ENCODE measurements at regions of chr10 and their contacts with region 1.

Region 1: DNA sequence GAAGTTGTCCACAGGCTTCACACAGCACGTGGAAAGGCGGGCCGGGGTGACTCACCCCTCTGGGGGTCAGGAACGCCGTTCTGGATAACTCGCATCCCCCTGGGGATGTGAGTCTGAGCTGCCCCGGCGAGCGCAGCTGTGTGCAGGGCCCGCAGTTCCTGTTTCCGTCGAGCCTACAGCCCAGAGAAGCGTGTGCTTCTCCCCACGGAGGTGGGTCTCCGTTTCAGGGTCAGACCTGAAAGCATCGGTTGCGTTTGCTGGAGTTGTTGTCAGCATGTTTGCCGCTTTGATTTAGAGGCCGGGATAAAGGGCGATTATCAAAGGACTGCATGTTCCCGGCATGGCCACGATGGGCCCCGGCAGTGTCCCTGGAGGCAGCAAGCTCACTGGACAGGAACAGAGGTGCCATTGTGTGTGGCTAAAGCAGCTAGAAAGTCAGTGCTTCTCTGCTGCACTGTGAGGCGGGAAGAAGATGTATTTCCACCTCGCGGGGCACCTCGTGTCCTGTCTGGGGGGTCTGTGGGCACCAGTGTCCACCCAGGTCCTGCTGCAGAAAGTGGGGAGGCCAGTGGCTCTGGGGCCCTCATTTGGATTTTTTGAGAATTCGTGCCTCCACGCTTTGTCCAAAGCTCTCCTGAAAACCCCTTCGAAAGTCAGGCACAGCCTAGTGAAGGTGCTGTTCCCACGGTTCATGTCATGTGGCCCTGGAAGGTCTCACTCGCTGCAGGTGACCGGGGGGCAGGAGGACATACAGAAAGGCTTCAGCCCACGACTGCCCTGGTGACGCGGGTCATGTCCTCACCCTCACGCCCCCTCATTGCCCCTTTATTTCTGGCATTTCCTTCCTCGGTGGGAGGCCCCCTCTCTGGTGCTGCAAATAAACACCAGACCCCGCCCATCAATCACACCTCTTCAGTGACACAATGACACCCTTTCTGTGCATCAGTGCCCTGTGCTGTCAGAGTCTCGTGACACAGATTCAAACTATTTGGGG is 27.4 kb upstream of the GDI2 start:
- DNase-seq: peak in 9 of 10 donors; percentile 48 to 78 (median 66)
- H3K4me3 ChIP-seq: peak overlapping the region in 44 of 59 donors; percentile 0 to 58 (median 32)
- H3K27ac ChIP-seq: peak overlapping the region in 58 of 59 donors; percentile 33 to 97 (median 88)
- H3K27me3 ChIP-seq: no peaks in the 10 kb centered on the region
- CTCF ChIP-seq: peak in 17 of 56 donors; percentile 6 to 29 (median 15)

Region 2: GRCh38 chr10:5858811-5859210 is 18.2 kb after region 1 on chr10:
- intact Hi-C with region 1: loop called in 1 of 2 experiments (anchors 2 kb)
- DNase-seq: peak in 9 of 10 donors; percentile 23 to 80 (median 66)
- H3K4me3 ChIP-seq: peak overlapping the region in 18 of 59 donors; percentile 7 to 45 (median 26)
- H3K27ac ChIP-seq: peak overlapping the region; percentile 46 to 99 (median 94)
- H3K27me3 ChIP-seq: no peaks in the 10 kb centered on the region
- CTCF ChIP-seq: peak in 17 of 56 donors; percentile 11 to 45 (median 17)

Region 3: DNA sequence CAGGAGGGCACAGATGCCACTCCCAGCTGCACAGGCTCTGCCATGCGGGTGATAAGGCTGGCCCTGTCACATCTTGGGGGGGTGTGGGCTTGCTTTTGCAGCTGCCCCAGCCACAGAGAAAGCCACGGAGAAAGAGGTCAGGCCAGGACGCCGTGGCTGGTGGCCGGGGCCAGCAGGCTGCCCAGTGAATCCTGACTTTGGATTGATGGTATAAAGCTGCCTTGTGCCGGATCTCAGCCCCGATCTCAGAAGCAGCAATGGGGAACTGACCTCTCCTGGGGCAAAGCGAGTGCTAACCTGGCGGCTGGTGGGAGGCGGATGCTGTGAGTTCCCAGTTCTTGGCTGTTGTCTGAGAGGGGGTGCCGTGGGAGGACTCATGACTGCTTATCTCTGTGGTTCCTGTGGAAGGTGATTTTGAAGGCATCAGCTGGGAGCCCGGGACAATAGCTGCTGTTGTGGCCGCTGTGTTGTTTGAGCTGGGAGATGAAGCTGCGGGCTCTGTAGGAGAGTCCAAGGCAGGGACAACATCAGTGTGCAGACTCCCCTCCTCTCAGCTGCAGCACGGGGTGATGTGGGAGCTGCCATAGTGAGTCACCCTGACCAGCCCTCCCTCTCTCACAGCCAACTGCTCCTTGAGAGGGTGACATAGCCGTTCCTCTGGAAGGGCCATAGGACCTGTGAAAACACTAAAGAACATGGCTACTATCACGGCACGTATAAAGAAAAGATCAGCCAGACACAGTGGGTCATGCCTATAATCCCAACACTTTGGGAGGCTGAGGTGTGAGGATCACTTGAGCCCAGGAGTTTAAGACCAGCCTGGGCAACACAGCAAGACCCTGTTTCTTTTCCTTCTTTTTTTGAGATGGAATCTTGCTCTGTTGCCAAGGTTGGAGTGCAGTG is 119.7 kb after region 1 on chr10:
- intact Hi-C with region 1: no loop called
- DNase-seq: peak in 4 of 10 donors; percentile 19 to 45 (median 31)
- H3K4me3 ChIP-seq: peak overlapping the region in 2 of 59 donors; percentile 18 to 20
- H3K27ac ChIP-seq: peak overlapping the region in 5 of 59 donors; percentile 1 to 49 (median 38)
- H3K27me3 ChIP-seq: no peaks in the 10 kb centered on the region
- CTCF ChIP-seq: no peak

Measured in dorsolateral prefrontal cortex (tissue), 120 donors.